Ascending aorta (tissue), 2 donors: ENCODE measurements at regions of chr4 and their contacts with region 1.

Region 1: GRCh38 chr4:95087657-95088455 is 330.1 kb downstream of the BMPR1B start:
- DNase-seq: no peak
- H3K4me3 ChIP-seq: no peak overlapping the region
- H3K27ac ChIP-seq: no peak overlapping the region
- H3K4me1 ChIP-seq: peaks cover 0 to 9% of the 10 kb centered on the region in 2 donors
- H3K27me3 ChIP-seq: no peaks in the 10 kb centered on the region
- CTCF ChIP-seq: no peak

Region 2: GRCh38 chr4:94653984-94654609 is 433.8 kb before region 1 on chr4:
- intact Hi-C with region 1: no loop called
- DNase-seq: no peak
- H3K4me3 ChIP-seq: peak overlapping the region in 1 of 2 donors; percentile 18
- H3K27ac ChIP-seq: peak overlapping the region in 1 of 2 donors; percentile 39
- H3K4me1 ChIP-seq: peaks cover 0 to 10% of the 10 kb centered on the region in 2 donors
- H3K27me3 ChIP-seq: no peaks in the 10 kb centered on the region
- CTCF ChIP-seq: no peak

Region 3: GRCh38 chr4:95049551-95050233 is 38.2 kb before region 1 on chr4:
- intact Hi-C with region 1: loop called (anchors 5 kb)
- DNase-seq: peak in 1 of 2 donors; percentile 65
- H3K4me3 ChIP-seq: no peak overlapping the region
- H3K27ac ChIP-seq: no peak overlapping the region
- H3K4me1 ChIP-seq: peaks cover 2 to 24% of the 10 kb centered on the region in 2 donors
- H3K27me3 ChIP-seq: no peaks in the 10 kb centered on the region
- CTCF ChIP-seq: no peak